Activated T-helper 2 cell treated with anti-CD3 and anti-CD28 coated beads, Interferon-gamma antibody, Interleukin-2, Interleukin-4, amounts not matched to agents 10 μg/mL and 5 μg/mL and 100 μg/mL, durations not matched to agents 14 hours and 24 hours and 36 hours (primary cell): ENCODE measurements at regions of chr3 and their contacts with region 1.

Region 1: GRCh38 chr3:12484198-12484974 is at the start of gene TSEN2:
- DNase-seq: peak; percentile 96
- H3K4me3 Mint-ChIP-seq: peak within 1 kb of the TSS; percentile 93
- H3K27ac Mint-ChIP-seq: peak within 1 kb of the TSS; percentile 91
- H3K4me1 Mint-ChIP-seq: peaks cover 38% of the 10 kb centered on the region
- H3K27me3 Mint-ChIP-seq: no peaks in the 10 kb centered on the region
- total RNA-seq, gene TSEN2: 23.6 and 28.5 TPM in 2 replicates

Region 2: DNA sequence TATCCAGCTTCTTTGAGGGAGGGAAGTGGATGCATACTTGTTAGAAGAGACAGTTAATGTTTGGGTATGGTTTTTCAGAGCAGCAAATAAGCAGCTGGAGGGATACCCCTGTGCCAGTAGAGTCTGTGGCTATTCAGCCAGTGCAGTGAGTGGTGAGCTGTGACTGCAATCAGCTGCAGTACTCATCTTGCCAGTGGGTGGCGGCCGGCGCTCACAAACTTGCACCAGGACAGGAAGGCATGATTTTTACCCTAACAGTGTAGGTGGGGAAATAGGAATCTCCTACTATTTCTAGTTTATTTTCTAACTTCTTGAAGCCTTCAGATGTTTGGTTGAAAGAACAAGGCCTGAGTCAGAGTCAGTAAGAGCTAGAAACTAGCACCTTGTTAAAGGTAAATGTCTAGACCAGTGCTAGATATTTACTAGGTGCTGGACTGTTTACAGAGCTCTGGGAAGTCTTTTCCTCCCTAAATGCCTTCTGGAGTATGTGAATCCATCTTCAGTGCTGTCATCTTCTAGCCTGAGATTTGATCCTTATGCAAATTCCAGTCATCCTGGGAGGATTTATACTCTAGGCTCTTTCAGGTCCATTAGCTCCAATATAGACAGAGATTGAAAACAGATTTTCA is 349.2 kb before region 1 on chr3:
- intact Hi-C with region 1: loop called (anchors 1 kb)
- DNase-seq: peak; percentile 44
- H3K4me3 Mint-ChIP-seq: no peak overlapping the region
- H3K27ac Mint-ChIP-seq: no peak overlapping the region
- H3K4me1 Mint-ChIP-seq: peaks cover 8% of the 10 kb centered on the region
- H3K27me3 Mint-ChIP-seq: peaks cover 30% of the 10 kb centered on the region

Region 3: GRCh38 chr3:12193485-12194165 is 290.8 kb before region 1 on chr3:
- intact Hi-C with region 1: loop called (anchors 2 kb)
- DNase-seq: peak; percentile 34
- H3K4me3 Mint-ChIP-seq: peak overlapping the region; percentile 54
- H3K27ac Mint-ChIP-seq: peak overlapping the region; percentile 95
- H3K4me1 Mint-ChIP-seq: peaks cover 77% of the 10 kb centered on the region
- H3K27me3 Mint-ChIP-seq: no peaks in the 10 kb centered on the region

Region 4: GRCh38 chr3:12336099-12336498 is 148.3 kb before region 1 on chr3:
- intact Hi-C with region 1: loop called (anchors 5 kb)
- DNase-seq: peak; percentile 11
- H3K4me3 Mint-ChIP-seq: peak overlapping the region; percentile 20
- H3K27ac Mint-ChIP-seq: peak overlapping the region; percentile 57
- H3K4me1 Mint-ChIP-seq: peaks cover 27% of the 10 kb centered on the region
- H3K27me3 Mint-ChIP-seq: peaks cover 1% of the 10 kb centered on the region

Region 5: GRCh38 chr3:12423918-12424630 is 60.3 kb before region 1 on chr3:
- intact Hi-C with region 1: loop called (anchors 5 kb)
- DNase-seq: no peak
- H3K4me3 Mint-ChIP-seq: no peak overlapping the region
- H3K27ac Mint-ChIP-seq: peak overlapping the region; percentile 66
- H3K4me1 Mint-ChIP-seq: peaks cover 52% of the 10 kb centered on the region
- H3K27me3 Mint-ChIP-seq: no peaks in the 10 kb centered on the region

Region 6: DNA sequence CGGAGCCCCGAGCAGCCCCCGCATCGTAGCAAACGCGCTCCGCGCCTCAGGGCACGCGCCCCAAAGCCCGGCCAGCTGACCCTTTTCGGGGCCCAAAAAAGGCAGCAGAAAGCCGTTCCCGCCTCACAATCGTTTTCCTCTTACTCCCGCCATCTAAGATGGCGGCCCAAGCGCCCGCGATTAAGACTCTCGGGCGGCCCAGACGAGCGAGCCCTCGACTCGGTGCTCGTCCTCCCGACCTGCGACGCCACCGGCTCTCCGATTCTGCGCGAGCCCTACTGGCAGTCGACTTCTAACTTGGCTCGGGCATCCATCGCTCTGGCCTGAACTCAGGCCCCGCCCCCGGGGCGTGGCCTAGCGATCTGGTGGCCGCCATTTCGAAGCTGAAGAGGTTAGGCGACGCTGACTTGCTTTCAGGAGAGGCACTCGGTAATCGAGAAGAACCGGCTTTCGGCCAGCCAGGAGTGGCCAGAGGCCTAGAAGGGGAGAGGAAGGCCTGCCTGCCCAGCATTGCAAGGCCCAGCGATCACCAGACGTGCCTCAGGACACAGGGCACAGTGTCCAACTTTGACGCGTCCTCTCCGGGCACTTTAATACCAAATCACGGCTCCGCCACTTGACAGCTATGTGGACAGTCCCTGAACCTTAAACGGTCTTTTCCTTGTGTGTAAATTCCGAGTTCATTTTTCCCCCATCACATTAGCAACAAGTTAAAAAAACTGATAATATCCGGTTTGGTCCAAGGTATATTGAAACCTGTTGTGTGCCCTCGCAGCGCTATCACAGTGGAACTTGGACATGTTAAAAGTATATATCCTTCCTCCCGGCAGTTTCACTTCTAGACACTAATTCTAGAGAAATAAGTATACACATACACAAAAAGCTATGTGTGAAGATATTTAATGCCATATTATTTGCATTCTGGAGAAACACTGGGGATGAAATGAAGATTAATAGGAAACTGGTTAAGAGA is 179.8 kb after region 1 on chr3 and contains the start of gene RAF1:
- intact Hi-C with region 1: loop called (anchors 1 kb)
- DNase-seq: peak; percentile 96
- H3K4me3 Mint-ChIP-seq: peak within 1 kb of the TSS; percentile 95
- H3K27ac Mint-ChIP-seq: peak within 1 kb of the TSS; percentile 98
- H3K4me1 Mint-ChIP-seq: peaks cover 20% of the 10 kb centered on the region
- H3K27me3 Mint-ChIP-seq: no peaks in the 10 kb centered on the region
- total RNA-seq, gene RAF1: 85.1 and 89.7 TPM in 2 replicates